AG04449 (cell line): ENCODE measurements at regions of chr20 and their contacts with region 1.

Region 1: DNA sequence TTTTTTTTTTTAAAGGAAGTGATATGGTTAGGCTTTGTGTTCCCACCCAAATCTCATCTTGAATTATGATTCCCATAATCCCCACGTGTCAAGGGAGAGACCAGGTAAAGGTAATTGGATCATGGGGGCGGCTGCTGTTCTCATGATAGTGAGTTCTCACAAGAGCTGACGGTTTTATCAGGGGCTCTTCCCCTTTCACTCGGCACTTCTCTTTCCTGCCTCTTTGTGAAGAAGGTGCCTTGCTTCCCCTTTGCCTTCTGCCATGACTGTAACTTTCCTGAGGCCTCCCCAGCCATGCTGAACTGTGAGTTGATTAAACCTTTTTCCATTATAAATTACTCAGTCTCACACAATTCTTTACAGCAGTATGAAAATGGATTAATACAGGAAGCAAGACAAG is 64.3 kb downstream of the ZFP64 start:
- DNase-seq: no peak
- H3K4me3 ChIP-seq: no peak overlapping the region
- CTCF ChIP-seq: no peak

Region 2: GRCh38 chr20:52104546-52105441 is 22.5 kb before region 1 on chr20:
- CTCF ChIA-PET with region 1: interaction called, 23 read pairs
- POLR2A ChIA-PET with region 1: no interaction called
- DNase-seq: no peak
- H3K4me3 ChIP-seq: peak overlapping the region; percentile 84
- CTCF ChIP-seq: no peak

Region 3: DNA sequence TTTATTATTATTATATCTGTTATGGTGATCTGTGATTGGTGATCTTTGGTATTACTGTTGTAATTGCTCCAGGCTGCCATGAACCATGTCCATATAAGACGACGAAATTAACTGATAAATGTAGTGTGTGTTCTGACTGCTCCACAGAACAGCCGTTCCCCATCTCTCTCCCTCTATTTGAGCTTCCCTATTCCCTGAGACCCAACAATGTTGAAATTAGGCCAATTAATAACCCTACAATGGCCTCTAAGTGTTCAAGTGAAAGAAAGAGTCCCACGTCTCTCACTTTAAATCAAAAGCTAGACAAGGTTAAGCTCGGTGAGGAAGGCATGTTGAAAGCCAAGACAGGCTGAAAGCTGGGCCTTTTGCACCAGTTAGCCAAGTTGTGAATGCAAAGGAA is 12.7 kb after region 1 on chr20:
- CTCF ChIA-PET with region 1: interaction called, 103 read pairs
- POLR2A ChIA-PET with region 1: no interaction called
- DNase-seq: no peak
- H3K4me3 ChIP-seq: no peak overlapping the region
- CTCF ChIP-seq: no peak

Region 4: GRCh38 chr20:52150440-52151258 is 23.3 kb after region 1 on chr20:
- CTCF ChIA-PET with region 1: interaction called, 103 read pairs
- POLR2A ChIA-PET with region 1: no interaction called
- DNase-seq: no peak
- H3K4me3 ChIP-seq: no peak overlapping the region
- CTCF ChIP-seq: peak; percentile 75

Region 5: DNA sequence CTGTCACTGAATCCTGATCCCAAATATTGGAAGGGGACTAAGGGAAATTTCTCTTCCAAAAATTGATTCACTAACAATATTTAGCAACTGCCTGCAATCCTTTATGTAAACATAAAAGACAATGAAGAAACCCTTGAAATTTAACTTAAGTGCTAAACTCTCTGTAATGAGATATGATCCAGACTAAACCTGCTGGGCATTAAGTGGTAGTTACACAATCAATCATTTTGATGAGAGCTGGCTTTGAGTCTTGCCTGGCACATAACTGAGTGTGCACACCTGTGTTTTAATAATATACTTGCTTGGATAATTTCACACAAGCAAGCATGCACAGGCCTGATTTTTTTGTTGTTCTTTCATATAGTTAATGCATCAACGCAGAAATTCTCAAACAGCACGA is 74.1 kb after region 1 on chr20:
- CTCF ChIA-PET with region 1: no interaction called
- POLR2A ChIA-PET with region 1: no interaction called
- DNase-seq: no peak
- H3K4me3 ChIP-seq: no peak overlapping the region
- CTCF ChIP-seq: no peak